Left lung (tissue), 14 donors: ENCODE measurements at regions of chr1 and their contacts with region 1.

Region 1: GRCh38 chr1:39183503-39184353 is 20.8 kb upstream of the MACF1 start:
- DNase-seq: peak in 1 of 4 donors; percentile 69
- ATAC-seq: peak; percentile 82
- H3K4me3 ChIP-seq: no peak overlapping the region
- H3K27ac ChIP-seq: peak overlapping the region; percentile 72 to 75
- H3K4me1 ChIP-seq: peaks cover 25 to 56% of the 10 kb centered on the region in 2 donors
- H3K27me3 ChIP-seq: no peaks in the 10 kb centered on the region
- CTCF ChIP-seq: peak; percentile 21 to 66

Region 2: GRCh38 chr1:39102537-39103327 is 81.0 kb before region 1 on chr1:
- intact Hi-C with region 1: loop called (anchors 10 kb)
- DNase-seq: peak in 3 of 4 donors; percentile 61 to 78 (median 66)
- ATAC-seq: peak; percentile 46
- H3K4me3 ChIP-seq: no peak overlapping the region
- H3K27ac ChIP-seq: peak overlapping the region; percentile 90 to 95
- H3K4me1 ChIP-seq: peaks cover 31 to 35% of the 10 kb centered on the region in 2 donors
- H3K27me3 ChIP-seq: peaks cover 0 to 26% of the 10 kb centered on the region in 2 donors
- CTCF ChIP-seq: peak; percentile 49 to 51

Region 3: GRCh38 chr1:39422614-39423013 is 238.9 kb after region 1 on chr1:
- intact Hi-C with region 1: no loop called
- DNase-seq: no peak
- ATAC-seq: no peak
- H3K4me3 ChIP-seq: no peak overlapping the region
- H3K27ac ChIP-seq: no peak overlapping the region
- H3K4me1 ChIP-seq: peaks cover 0 to 16% of the 10 kb centered on the region in 2 donors
- H3K27me3 ChIP-seq: no peaks in the 10 kb centered on the region
- CTCF ChIP-seq: no peak